ENCODE measurements at regions of chr6 and their contacts with region 1.

Region 1: GRCh38 chr6:73520688-73521350 is at the start of gene EEF1A1:
- DNase-seq: peak; percentile 99 to 100
- H3K4me3 ChIP-seq: peak within 1 kb of the TSS; percentile 76
- H3K4me3 Mint-ChIP-seq: peak within 1 kb of the TSS; percentile 81
- H3K27ac Mint-ChIP-seq: peak within 1 kb of the TSS; percentile 98
- H3K4me1 ChIP-seq: peaks cover 8% of the 10 kb centered on the region
- H3K4me1 Mint-ChIP-seq: peaks cover 11% of the 10 kb centered on the region
- H3K27me3 ChIP-seq: no peaks in the 10 kb centered on the region
- H3K27me3 Mint-ChIP-seq: no peaks in the 10 kb centered on the region
- CTCF ChIP-seq: no peak
- total RNA-seq, gene EEF1A1: 9,246 and 9,491 TPM in 2 replicates

Region 2: GRCh38 chr6:73451223-73452107 is 69.4 kb before region 1 on chr6:
- CTCF ChIA-PET with region 1: no interaction called
- POLR2A ChIA-PET with region 1: interaction called, 4 read pairs
- intact Hi-C with region 1: loop called (anchors 5 kb)
- DNase-seq: peak; percentile 56 to 71
- H3K4me3 ChIP-seq: peak overlapping the region; percentile 73
- H3K4me3 Mint-ChIP-seq: peak overlapping the region; percentile 80
- H3K27ac Mint-ChIP-seq: peak overlapping the region; percentile 52
- H3K4me1 ChIP-seq: peaks cover 3% of the 10 kb centered on the region; the same call in 1 of the 2 replicates
- H3K4me1 Mint-ChIP-seq: peaks cover 16% of the 10 kb centered on the region
- H3K27me3 ChIP-seq: no peaks in the 10 kb centered on the region
- H3K27me3 Mint-ChIP-seq: no peaks in the 10 kb centered on the region
- CTCF ChIP-seq: no peak

Region 3: DNA sequence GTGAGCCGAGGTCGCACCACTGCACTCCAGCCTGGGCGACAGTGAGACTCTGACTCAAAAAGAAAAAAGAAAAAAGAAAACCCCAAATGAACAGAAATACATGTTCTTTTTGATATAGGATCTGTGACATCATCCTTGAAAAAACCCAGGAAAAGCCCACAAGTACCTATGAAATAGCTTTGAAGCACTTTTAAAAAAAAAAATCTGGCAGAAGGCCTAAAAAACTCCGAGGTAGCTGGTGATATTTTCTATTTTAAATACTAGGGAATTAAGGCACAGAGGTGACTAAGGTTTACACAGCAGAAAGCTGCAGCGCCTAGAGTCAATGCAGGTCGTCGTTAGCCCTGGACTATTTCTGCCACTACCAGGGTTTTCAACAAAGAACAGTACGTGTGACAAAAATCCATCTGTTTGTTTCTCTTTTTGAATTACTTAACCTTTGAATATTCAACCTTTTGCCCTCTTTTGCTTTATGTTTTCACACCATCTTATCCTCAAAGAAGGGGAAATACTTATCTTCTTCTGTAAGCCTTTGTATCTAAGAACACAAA is 39.4 kb after region 1 on chr6:
- CTCF ChIA-PET with region 1: no interaction called
- POLR2A ChIA-PET with region 1: interaction called, 70 read pairs
- intact Hi-C with region 1: loop called (anchors 1 kb)
- DNase-seq: peak; percentile 42 to 43
- H3K4me3 ChIP-seq: no peak overlapping the region
- H3K4me3 Mint-ChIP-seq: peak overlapping the region; percentile 11
- H3K27ac Mint-ChIP-seq: peak overlapping the region; percentile 64
- H3K4me1 ChIP-seq: peaks cover 51% of the 10 kb centered on the region
- H3K4me1 Mint-ChIP-seq: peaks cover 19% of the 10 kb centered on the region
- H3K27me3 ChIP-seq: no peaks in the 10 kb centered on the region
- H3K27me3 Mint-ChIP-seq: no peaks in the 10 kb centered on the region
- CTCF ChIP-seq: no peak

Region 4: DNA sequence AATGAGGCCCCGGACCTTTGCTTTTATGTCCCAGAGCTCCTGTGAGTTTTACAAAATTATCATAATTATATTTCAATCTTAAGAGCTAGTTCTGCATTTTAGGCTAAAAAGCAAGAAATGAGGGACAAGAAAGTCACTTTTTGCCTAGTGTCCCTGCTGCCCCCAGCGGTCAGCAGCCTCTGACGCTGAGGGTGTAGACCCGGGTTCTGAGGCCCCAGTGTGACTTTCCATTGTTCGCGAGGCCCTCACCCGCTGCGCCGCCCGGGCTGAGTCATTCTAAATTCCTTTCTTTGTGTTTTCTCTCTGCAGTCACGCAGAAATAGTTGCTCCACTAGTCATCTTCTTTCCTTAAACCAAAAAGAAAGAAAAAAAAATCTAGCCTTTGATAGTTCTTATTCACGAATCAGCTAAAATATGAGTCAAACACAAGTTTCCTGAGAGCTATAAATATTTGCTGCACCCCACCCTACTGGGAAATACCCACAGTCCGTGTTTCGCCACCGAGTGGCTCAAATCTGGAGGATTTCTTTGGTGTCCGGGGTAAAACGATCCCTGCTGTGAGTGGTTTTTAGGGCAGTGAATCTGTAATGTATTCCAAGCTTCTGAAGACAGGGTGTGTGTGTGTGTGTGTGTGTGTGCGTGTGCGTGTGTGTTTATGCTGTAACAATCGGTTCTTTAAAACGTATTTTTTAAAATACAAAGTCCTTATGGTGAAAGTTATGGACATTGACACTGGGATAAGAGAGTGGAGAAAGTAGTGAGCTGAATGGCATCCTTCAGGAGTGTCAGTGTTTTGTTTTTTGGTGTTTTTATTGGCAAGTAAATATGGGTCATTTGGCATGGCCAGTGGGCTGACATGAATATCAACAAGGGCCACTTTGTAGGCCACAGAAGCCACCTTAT is 59.7 kb after region 1 on chr6:
- CTCF ChIA-PET with region 1: interaction called, 5 read pairs
- POLR2A ChIA-PET with region 1: interaction called, 38 read pairs
- intact Hi-C with region 1: loop called (anchors 1 kb)
- DNase-seq: peak; percentile 93
- H3K4me3 ChIP-seq: peak overlapping the region; percentile 21
- H3K4me3 Mint-ChIP-seq: peak overlapping the region; percentile 94
- H3K27ac Mint-ChIP-seq: peak overlapping the region; percentile 100
- H3K4me1 ChIP-seq: peaks cover 30% of the 10 kb centered on the region
- H3K4me1 Mint-ChIP-seq: peaks cover 20% of the 10 kb centered on the region
- H3K27me3 ChIP-seq: no peaks in the 10 kb centered on the region
- H3K27me3 Mint-ChIP-seq: no peaks in the 10 kb centered on the region
- CTCF ChIP-seq: peak; percentile 61 to 76

Region 5: GRCh38 chr6:73610444-73611275 is 89.8 kb after region 1 on chr6:
- CTCF ChIA-PET with region 1: interaction called, 7 read pairs
- POLR2A ChIA-PET with region 1: interaction called, 6 read pairs
- intact Hi-C with region 1: loop called (anchors 1 kb)
- DNase-seq: peak in 1 of 2 experiments; percentile 53
- H3K4me3 ChIP-seq: no peak overlapping the region
- H3K4me3 Mint-ChIP-seq: no peak overlapping the region
- H3K27ac Mint-ChIP-seq: no peak overlapping the region
- H3K4me1 ChIP-seq: no peaks in the 10 kb centered on the region
- H3K4me1 Mint-ChIP-seq: no peaks in the 10 kb centered on the region
- H3K27me3 ChIP-seq: no peaks in the 10 kb centered on the region
- H3K27me3 Mint-ChIP-seq: no peaks in the 10 kb centered on the region
- CTCF ChIP-seq: peak; percentile 42 to 58

Measured in Caco-2 (cell line).